Calu3 (cell line): ENCODE measurements at regions of chr16 and their contacts with region 1.

Region 1: DNA sequence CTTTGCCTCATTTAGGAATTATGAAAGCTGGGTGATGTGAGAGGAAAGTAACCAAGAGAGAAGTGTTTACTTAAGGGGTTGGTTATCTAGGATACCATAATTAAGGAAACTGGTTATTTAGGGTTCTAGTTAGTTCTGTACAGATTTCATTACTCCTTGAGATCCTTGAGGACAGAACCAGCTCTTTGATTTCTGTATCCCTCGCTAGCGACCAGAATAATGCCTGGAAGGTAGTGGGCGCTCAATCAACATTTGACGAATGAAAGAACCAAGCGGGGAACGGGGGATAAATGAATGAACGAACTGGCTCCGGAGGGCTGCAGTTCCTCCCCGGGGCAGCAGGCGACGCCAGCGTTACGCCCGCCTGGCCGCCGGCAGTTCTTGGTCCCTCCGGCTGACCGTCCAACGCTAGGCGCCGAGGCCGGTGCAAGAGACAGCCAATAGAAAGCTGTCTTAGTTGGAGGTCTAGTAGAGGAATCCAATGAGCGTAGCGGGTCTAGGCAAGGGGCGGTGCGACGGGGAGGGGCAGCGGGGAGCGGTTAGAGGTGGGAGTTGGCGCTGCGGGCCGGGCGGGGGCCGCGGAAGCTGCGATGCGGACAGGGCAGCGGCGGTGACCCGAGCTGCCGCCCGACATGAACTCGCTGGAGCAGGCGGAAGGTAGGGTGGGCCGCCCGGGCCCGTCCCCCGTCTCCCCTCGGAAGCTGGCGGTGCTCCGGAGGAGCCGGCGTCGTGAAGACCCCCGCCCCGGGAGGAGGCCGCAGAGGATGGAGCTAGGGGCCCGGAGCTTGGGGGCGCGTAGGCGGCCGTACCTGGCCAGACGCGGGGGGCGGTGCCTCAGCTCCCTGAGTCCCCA is at the start of gene CNEP1R1:
- DNase-seq: peak; percentile 97
- H3K4me3 Mint-ChIP-seq: peak within 1 kb of the TSS; percentile 89
- H3K27ac Mint-ChIP-seq: peak within 1 kb of the TSS; percentile 86
- H3K4me1 Mint-ChIP-seq: no peaks in the 10 kb centered on the region
- H3K27me3 Mint-ChIP-seq: peaks cover 27% of the 10 kb centered on the region
- CTCF ChIP-seq: peak; percentile 99
- total RNA-seq, gene CNEP1R1: 21.8 and 23.2 TPM in 2 replicates

Region 2: GRCh38 chr16:50065624-50066481 is 40.9 kb after region 1 on chr16 and contains the start of gene HEATR3:
- CTCF ChIA-PET with region 1: interaction called, 32 read pairs
- intact Hi-C with region 1: loop called (anchors 2 kb)
- DNase-seq: peak; percentile 97
- H3K4me3 Mint-ChIP-seq: peak within 1 kb of the TSS; percentile 75
- H3K27ac Mint-ChIP-seq: peak within 1 kb of the TSS; percentile 42
- H3K4me1 Mint-ChIP-seq: peaks cover 25% of the 10 kb centered on the region
- H3K27me3 Mint-ChIP-seq: no peaks in the 10 kb centered on the region
- CTCF ChIP-seq: no peak
- total RNA-seq, gene HEATR3: 27.3 and 28.3 TPM in 2 replicates

Region 3: DNA sequence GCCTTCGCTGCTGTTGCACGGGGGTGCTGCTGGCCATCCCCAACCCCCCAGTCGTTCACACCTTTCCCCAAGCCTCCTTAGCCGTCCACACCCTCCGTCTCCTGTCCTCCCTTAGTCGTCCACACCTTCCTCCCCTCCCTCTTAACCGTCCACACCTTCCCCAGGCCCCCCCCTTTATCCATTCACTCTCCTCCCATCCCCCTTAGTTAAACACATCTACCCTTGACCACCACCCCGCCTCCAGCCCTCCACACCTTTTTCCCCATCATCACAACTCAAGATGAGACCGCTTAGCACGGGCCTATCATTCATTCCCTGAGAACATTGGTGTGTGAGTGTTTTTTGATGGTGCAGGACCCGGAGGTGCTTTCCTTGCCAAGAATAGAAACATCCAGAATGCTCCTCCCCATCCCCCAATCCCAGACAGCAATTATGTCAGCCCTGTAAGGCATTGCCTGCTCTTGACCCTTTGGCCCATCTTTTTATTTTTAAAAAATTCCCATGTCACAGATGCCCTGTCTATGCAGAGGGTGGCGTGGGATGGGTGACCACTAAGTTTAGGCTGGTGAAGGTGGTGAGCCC is 129.6 kb after region 1 on chr16:
- CTCF ChIA-PET with region 1: no interaction called
- intact Hi-C with region 1: loop called (anchors 5 kb)
- DNase-seq: no peak
- H3K4me3 Mint-ChIP-seq: peak overlapping the region; percentile 80
- H3K27ac Mint-ChIP-seq: peak overlapping the region; percentile 42
- H3K4me1 Mint-ChIP-seq: peaks cover 43% of the 10 kb centered on the region
- H3K27me3 Mint-ChIP-seq: no peaks in the 10 kb centered on the region
- CTCF ChIP-seq: no peak

Region 4: DNA sequence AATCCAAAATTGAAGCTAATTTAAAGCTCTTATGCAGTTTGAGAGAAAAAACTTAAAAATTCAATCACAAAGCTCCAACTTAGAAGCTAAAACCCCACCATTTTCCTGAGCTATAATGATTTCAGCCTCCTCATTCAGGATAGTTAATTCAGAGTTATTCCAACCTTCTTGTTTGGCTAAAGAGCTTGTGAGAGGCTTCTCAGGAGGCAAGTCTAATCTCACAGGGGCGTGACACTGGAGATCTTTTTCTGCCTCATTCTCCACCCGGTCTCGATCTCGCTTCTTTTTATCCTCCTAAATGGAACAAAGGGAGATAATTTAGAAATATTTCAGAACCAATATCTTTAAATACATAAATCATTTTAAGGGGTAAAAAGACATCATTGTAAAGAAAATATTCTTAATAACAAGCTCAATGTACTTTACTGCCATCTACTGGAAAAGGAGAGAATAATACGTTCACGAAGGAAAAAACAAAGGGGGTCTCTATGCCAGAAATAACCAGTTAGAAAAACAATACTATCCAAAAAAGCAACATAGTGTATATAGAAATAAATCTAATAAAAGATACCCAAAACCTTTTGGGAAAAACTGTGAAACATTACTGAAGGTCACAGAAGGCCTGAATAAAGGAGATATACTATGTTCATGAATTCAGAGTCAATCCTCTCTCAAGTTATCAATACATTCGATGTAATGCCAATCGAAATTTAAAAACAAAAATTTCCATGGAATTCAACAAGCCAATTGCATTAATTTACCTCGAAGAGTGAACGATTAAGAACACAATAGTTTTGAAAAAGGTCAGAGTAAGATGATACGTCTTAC is 329.9 kb after region 1 on chr16:
- CTCF ChIA-PET with region 1: interaction called, 8 read pairs
- intact Hi-C with region 1: loop called (anchors 10 kb)
- DNase-seq: no peak
- H3K4me3 Mint-ChIP-seq: no peak overlapping the region
- H3K27ac Mint-ChIP-seq: no peak overlapping the region
- H3K4me1 Mint-ChIP-seq: peaks cover 10% of the 10 kb centered on the region
- H3K27me3 Mint-ChIP-seq: no peaks in the 10 kb centered on the region
- CTCF ChIP-seq: peak; percentile 63